SK-N-SH (cell line): ENCODE measurements at regions of chr1 and their contacts with region 1.

Region 1: DNA sequence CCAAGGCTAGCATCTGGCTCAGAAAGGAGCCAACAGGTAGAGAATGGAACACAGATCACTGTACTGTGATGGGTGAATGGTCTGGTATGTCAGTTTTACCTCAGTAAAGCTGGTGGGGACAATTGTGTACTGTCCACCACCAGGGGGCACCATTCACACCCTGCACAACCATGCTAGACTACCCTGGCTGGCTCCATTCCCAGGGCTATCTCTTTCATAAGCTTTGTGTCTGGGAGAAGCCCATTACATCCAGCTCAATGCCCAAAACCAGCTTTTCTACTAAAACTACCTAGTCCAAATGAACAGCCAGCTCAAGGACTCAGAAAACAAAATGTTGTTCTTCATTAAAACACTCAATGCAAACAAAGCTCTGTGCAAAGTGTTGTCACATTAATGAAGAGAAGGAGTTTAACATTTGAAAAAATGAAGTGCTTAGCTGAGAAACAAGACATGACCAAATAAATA is 62.0 kb upstream of the RASAL2 start:
- DNase-seq: peak; percentile 81
- H3K4me3 ChIP-seq: no peak overlapping the region; a peak in 1 of 4 replicates
- H3K27ac ChIP-seq: no peak overlapping the region
- H3K4me1 ChIP-seq: no peaks in the 10 kb centered on the region
- H3K27me3 ChIP-seq: no peaks in the 10 kb centered on the region
- CTCF ChIP-seq: peak; percentile 90
- EP300 ChIP-seq: no peak
- RAD21 ChIP-seq: peak; percentile 78

Region 2: DNA sequence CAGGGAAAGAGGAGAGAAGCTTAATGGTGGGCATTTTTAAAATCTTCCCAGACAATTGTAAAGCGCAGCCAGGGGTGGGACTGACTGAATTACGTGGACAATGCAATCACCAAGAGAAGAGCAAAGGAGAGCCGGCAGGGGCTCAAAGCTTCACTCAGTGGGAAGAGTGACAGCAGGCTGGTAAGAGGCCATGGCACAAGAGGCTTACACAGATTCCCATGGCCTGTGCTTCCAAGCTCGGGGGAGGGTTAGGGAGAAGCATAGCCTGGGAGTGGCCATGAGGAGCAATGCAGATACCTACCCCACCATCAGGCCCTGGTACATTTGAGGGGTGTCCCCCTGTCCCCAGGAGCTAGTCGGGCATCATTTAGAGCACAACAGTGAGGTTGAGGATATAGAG is 34.9 kb before region 1 on chr1:
- CTCF ChIA-PET with region 1: interaction called, 12 read pairs
- POLR2A ChIA-PET with region 1: no interaction called
- DNase-seq: no peak
- H3K4me3 ChIP-seq: no peak overlapping the region
- H3K27ac ChIP-seq: no peak overlapping the region
- H3K4me1 ChIP-seq: no peaks in the 10 kb centered on the region
- H3K27me3 ChIP-seq: no peaks in the 10 kb centered on the region
- CTCF ChIP-seq: no peak
- EP300 ChIP-seq: no peak
- RAD21 ChIP-seq: no peak

Region 3: DNA sequence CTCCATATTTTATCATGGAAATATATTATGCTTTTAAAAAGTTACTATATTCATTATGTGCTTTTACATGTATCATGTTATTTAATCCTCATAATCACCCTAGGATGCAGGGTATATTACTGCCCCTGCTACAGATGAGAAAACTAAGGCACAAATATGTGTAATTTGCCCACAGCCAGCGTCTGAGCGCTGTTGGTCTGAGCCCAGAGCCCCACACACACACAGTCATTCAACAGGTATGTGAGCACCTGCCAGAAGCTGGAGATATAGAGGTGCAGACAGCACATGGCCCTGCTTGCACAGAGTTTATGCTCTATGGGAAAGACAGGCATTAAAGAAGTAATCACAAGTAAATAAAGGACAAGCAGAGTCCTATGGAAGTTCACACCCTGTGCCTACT is 12.3 kb before region 1 on chr1:
- CTCF ChIA-PET with region 1: interaction called, 16 read pairs
- POLR2A ChIA-PET with region 1: no interaction called
- DNase-seq: no peak
- H3K4me3 ChIP-seq: no peak overlapping the region
- H3K27ac ChIP-seq: no peak overlapping the region
- H3K4me1 ChIP-seq: no peaks in the 10 kb centered on the region
- H3K27me3 ChIP-seq: no peaks in the 10 kb centered on the region
- CTCF ChIP-seq: no peak
- EP300 ChIP-seq: no peak
- RAD21 ChIP-seq: no peak

Region 4: GRCh38 chr1:178189814-178190213 is 157.9 kb after region 1 on chr1:
- CTCF ChIA-PET with region 1: interaction called, 52 read pairs
- POLR2A ChIA-PET with region 1: no interaction called
- DNase-seq: peak; percentile 57
- H3K4me3 ChIP-seq: no peak overlapping the region
- H3K27ac ChIP-seq: no peak overlapping the region
- H3K4me1 ChIP-seq: no peaks in the 10 kb centered on the region; a peak in 1 of 4 replicates
- H3K27me3 ChIP-seq: no peaks in the 10 kb centered on the region
- CTCF ChIP-seq: peak; percentile 61
- EP300 ChIP-seq: no peak
- RAD21 ChIP-seq: peak; percentile 82

Region 5: DNA sequence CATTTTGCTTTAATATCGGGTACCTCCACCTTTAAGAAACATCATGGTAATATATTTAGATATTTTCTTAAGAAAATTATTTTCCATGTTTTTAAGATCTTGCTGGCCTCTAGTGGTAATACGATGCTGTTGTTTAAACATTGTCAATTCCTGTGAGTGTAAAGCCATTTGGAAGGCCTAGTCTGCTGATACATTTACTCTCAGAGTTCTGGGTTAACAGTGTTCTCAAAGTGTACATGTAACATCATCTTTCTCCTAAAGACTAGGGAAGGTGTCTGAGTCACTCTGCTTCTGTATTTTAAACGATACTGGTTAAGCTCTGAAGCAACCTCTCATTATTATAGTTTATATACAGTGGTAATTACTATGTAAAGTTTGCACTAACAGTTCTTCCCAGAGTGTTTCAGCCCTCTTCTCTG is 251.1 kb after region 1 on chr1:
- CTCF ChIA-PET with region 1: interaction called, 14 read pairs
- POLR2A ChIA-PET with region 1: no interaction called
- DNase-seq: peak; percentile 24
- H3K4me3 ChIP-seq: no peak overlapping the region
- H3K27ac ChIP-seq: peak overlapping the region in 1 of 2 experiments; percentile 7; a peak in 1 of 4 replicates
- H3K4me1 ChIP-seq: peaks cover 0 to 4% of the 10 kb centered on the region in 2 experiments; a peak in 1 of 4 replicates
- H3K27me3 ChIP-seq: no peaks in the 10 kb centered on the region
- CTCF ChIP-seq: peak; percentile 75
- EP300 ChIP-seq: no peak
- RAD21 ChIP-seq: peak; percentile 64